ENCODE measurements at regions of chr15 and their contacts with region 1.

Region 1: GRCh38 chr15:93274257-93274656 is 185.2 kb upstream of the RGMA start:
- DNase-seq: no peak
- ATAC-seq: no peak
- H3K4me3 ChIP-seq: no peak overlapping the region
- H3K27ac ChIP-seq: no peak overlapping the region
- H3K4me1 ChIP-seq: no peaks in the 10 kb centered on the region
- H3K27me3 ChIP-seq: no peaks in the 10 kb centered on the region
- CTCF ChIP-seq: no peak

Region 2: GRCh38 chr15:93210995-93211394 is 63.3 kb before region 1 on chr15:
- CTCF ChIA-PET with region 1: no interaction called
- POLR2A ChIA-PET with region 1: interaction called, 14 read pairs
- in situ Hi-C with region 1: no loop called
- intact Hi-C with region 1: no loop called
- DNase-seq: no peak
- ATAC-seq: no peak
- H3K4me3 ChIP-seq: no peak overlapping the region
- H3K27ac ChIP-seq: no peak overlapping the region
- H3K4me1 ChIP-seq: no peaks in the 10 kb centered on the region
- H3K27me3 ChIP-seq: 0 out of 2 replicates have a peak, but pooled peaks cover 2% of the 10 kb centered on the region
- CTCF ChIP-seq: no peak

Region 3: DNA sequence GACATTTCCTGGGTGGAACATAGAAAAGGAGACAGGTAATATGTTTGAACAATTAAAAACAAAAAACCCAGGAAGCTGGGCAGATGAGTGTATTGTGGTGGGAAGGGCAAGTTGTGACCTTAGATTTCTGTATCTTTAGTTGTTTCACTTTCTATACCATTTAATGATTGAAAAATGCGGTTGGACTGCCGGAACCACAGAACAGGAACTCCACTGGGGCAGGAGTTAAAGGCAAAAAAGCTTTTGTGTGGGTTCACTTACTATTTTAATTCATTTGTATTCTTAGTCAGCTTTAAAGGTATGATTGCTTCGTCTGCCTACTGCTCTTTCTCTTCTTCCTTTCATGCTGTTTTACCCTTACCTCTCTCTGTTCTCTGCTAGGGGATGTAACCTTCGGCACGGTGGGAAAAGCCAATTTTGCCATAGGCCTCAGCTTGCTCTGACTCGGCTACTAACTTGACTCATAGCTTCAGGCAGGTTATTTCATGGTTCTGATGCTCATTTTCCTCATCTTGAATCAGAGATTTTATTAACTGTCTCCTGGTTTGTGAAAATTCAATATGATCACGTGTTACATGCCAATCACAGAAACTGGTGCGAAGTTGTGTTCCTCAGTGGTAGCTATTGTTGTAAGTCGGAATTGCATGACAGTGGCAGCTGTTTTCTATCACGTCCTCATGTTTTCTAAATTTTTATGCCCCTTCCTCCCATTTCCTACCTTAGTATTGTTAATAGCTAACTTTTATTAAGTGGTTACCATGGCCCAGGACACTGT is 955.5 kb after region 1 on chr15:
- CTCF ChIA-PET with region 1: no interaction called
- POLR2A ChIA-PET with region 1: interaction called, 17 read pairs
- in situ Hi-C with region 1: no loop called
- intact Hi-C with region 1: no loop called
- DNase-seq: no peak
- ATAC-seq: no peak
- H3K4me3 ChIP-seq: no peak overlapping the region
- H3K27ac ChIP-seq: no peak overlapping the region
- H3K4me1 ChIP-seq: peaks cover 5% of the 10 kb centered on the region; the same call in 1 of the 2 replicates
- H3K27me3 ChIP-seq: peaks cover 8% of the 10 kb centered on the region
- CTCF ChIP-seq: no peak

Measured in Panc1 (cell line).